AG04449 (cell line): ENCODE measurements at regions of chr7 and their contacts with region 1.

Region 1: DNA sequence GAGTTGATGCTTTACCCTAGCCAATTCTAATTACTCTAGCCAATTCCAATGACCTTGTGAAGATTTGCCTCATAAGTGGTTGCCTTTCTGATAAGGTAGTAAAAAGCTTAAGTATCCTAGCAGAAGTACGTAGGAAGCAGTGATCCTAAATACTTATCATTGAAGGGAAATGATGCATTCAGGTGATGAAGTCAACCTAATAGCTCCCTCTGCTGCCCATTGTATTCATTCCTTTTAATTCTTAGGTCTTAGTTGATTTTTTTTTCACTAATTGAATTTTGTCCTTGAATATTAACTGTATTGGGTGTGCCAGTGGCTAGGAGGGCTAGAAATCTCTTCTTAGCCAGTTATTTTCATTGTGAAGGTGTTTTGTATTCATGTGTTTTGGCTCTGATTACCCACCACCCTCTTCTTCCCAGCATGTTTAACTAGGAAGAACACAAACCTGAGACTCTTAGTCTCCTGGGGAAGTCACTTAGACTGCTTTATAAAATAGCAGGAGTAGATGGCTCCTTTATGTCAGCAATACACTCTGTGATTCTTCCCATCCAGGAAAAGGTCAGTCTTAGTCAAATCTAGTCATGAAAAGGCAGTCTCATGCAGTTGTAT is 46.3 kb downstream of the PLEKHA8 start:
- DNase-seq: no peak
- H3K4me3 ChIP-seq: no peak overlapping the region
- CTCF ChIP-seq: peak; percentile 45

Region 2: GRCh38 chr7:29748286-29749108 is 326.0 kb before region 1 on chr7:
- CTCF ChIA-PET with region 1: interaction called, 12 read pairs
- POLR2A ChIA-PET with region 1: no interaction called
- DNase-seq: peak; percentile 10
- H3K4me3 ChIP-seq: no peak overlapping the region
- CTCF ChIP-seq: peak; percentile 40

Region 3: GRCh38 chr7:29878081-29878688 is 196.3 kb before region 1 on chr7:
- CTCF ChIA-PET with region 1: interaction called, 27 read pairs
- POLR2A ChIA-PET with region 1: no interaction called
- DNase-seq: no peak
- H3K4me3 ChIP-seq: no peak overlapping the region
- CTCF ChIP-seq: peak; percentile 47

Region 4: DNA sequence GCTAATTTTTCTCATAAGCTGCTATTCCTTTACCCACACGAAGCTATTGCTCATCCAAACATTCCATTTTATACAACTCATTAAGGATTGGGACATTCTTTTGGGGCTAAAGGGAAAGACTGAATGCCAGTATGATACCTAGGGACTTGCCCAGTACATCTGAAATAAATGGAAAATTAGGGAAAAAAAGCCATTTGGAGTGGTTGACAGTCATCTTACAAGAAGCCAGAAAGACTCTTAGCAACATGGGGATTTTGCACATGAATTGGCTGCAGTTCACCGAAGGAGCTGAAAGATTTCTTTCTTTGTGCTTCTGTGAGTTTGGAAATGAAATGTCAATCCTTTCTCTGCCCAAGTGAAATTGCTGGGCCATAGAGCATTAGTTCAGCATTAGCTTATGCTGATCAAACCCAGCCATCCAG is 17.0 kb after region 1 on chr7:
- CTCF ChIA-PET with region 1: interaction called, 84 read pairs
- POLR2A ChIA-PET with region 1: no interaction called
- DNase-seq: peak; percentile 74
- H3K4me3 ChIP-seq: no peak overlapping the region
- CTCF ChIP-seq: no peak